A673 (cell line): ENCODE measurements at regions of chr3 and their contacts with region 1.

Region 1: DNA sequence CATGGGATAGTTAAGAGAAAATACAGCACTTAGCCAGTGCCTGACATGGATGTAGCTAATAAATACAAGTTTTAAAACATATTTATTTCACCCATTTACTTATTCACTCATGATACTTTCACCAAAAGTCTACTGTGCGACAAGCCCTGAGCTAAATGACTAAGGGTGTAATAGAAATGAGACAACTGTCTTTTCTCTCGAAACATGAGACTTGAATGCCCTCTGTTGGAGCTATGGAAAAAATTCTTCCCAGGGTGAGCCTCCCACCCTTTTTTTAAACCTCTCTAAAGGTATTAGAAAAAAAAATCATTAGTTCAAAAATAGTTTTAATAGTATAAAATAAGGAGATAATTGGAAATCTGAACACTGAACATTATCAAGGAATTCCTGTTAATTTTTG is 24.3 kb upstream of the RPL14 start:
- DNase-seq: peak; percentile 6
- H3K4me3 ChIP-seq: no peak overlapping the region
- H3K27ac ChIP-seq: no peak overlapping the region
- H3K4me1 ChIP-seq: no peaks in the 10 kb centered on the region
- H3K27me3 ChIP-seq: no peaks in the 10 kb centered on the region
- CTCF ChIP-seq: no peak; the same call in 1 of the 2 replicates

Region 2: GRCh38 chr3:40337136-40338108 is 95.4 kb before region 1 on chr3:
- CTCF ChIA-PET with region 1: no interaction called
- POLR2A ChIA-PET with region 1: no interaction called
- intact Hi-C with region 1: loop called (anchors 10 kb)
- DNase-seq: no peak
- H3K4me3 ChIP-seq: no peak overlapping the region
- H3K27ac ChIP-seq: no peak overlapping the region
- H3K4me1 ChIP-seq: no peaks in the 10 kb centered on the region
- H3K27me3 ChIP-seq: no peaks in the 10 kb centered on the region
- CTCF ChIP-seq: no peak

Region 3: DNA sequence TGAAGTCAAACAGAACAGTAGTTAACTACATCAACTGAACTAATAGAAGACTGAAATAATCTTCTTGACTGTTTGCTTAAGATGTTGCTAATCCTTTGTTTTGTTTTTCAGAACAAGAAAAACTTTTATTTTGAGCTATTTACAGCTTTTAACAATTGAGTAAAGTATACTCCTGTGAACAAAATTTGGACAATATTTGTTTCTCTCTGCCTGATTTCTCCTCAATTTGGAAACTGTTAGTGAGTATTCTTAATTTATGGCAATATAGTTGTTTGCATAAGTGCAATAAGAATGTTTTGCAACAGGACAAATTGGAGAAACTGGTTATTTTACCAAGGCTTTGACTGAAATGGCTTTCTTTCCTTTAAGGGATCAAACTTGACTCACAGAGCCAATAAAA is 82.3 kb before region 1 on chr3:
- CTCF ChIA-PET with region 1: no interaction called
- POLR2A ChIA-PET with region 1: no interaction called
- intact Hi-C with region 1: no loop called
- DNase-seq: no peak
- H3K4me3 ChIP-seq: no peak overlapping the region
- H3K27ac ChIP-seq: no peak overlapping the region
- H3K4me1 ChIP-seq: no peaks in the 10 kb centered on the region
- H3K27me3 ChIP-seq: no peaks in the 10 kb centered on the region
- CTCF ChIP-seq: no peak